Activated CD4-positive, alpha-beta T cell treated with anti-CD3 and anti-CD28 coated beads for 36 hours (primary cell): ENCODE measurements at regions of chr11 and their contacts with region 1.

Region 1: DNA sequence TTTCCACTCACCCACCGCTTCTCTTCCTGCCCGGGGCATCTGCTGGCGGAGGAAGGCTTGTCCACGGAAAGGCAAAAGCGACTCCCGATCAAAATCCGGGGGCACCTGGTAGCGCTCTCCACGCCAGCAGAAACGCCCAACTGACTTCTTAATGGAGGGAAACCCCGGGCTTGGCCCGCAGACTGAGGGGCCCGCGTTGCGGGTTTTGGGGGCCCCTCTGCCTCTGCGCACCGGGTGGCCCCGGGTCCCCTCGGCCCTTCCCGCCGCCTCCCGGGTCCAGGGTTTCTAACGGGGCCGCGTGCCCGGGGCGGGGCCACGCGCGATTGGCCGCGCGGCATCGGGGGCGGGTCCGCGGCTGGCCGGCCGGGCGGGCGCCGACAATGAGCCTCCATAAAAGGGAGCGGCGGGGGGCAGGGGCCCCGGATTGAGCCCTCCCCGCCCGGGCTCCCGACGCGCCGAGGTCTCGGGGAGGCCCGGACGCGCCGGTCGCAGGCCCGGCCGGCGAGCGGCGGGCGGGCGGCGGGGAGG is at the start of gene SPINDOC:
- DNase-seq: peak; percentile 80
- ATAC-seq: peak; percentile 91
- H3K4me3 Mint-ChIP-seq: peak within 1 kb of the TSS; percentile 77
- H3K27ac Mint-ChIP-seq: no peak within 1 kb of the TSS
- H3K4me1 Mint-ChIP-seq: peaks cover 21% of the 10 kb centered on the region
- H3K27me3 Mint-ChIP-seq: no peaks in the 10 kb centered on the region
- total RNA-seq, gene SPINDOC: 25.7 to 26.2 TPM

Region 2: GRCh38 chr11:63681321-63682049 is 131.6 kb before region 1 on chr11 and contains the start of gene RTN3:
- CTCF ChIA-PET with region 1: no interaction called
- POLR2A ChIA-PET with region 1: no interaction called
- intact Hi-C with region 1: loop called in 1 of 2 experiments (anchors 1 kb)
- DNase-seq: peak; percentile 99
- ATAC-seq: peak; percentile 94
- H3K4me3 Mint-ChIP-seq: peak within 1 kb of the TSS; percentile 90
- H3K27ac Mint-ChIP-seq: peak within 1 kb of the TSS; percentile 89
- H3K4me1 Mint-ChIP-seq: peaks cover 20% of the 10 kb centered on the region
- H3K27me3 Mint-ChIP-seq: no peaks in the 10 kb centered on the region
- total RNA-seq, gene RTN3: 42.2 to 43.0 TPM

Region 3: GRCh38 chr11:63974259-63975143 is 161.4 kb after region 1 on chr11 and contains the start of gene COX8A:
- CTCF ChIA-PET with region 1: no interaction called
- POLR2A ChIA-PET with region 1: no interaction called
- intact Hi-C with region 1: loop called in 1 of 2 experiments (anchors 1 kb)
- DNase-seq: peak; percentile 97
- ATAC-seq: peak; percentile 100
- H3K4me3 Mint-ChIP-seq: peak within 1 kb of the TSS; percentile 95
- H3K27ac Mint-ChIP-seq: peak within 1 kb of the TSS; percentile 97
- H3K4me1 Mint-ChIP-seq: peaks cover 20% of the 10 kb centered on the region
- H3K27me3 Mint-ChIP-seq: no peaks in the 10 kb centered on the region
- total RNA-seq, gene COX8A: 413 to 454 TPM